ENCODE measurements at regions of chr9 and their contacts with region 1.

Region 1: DNA sequence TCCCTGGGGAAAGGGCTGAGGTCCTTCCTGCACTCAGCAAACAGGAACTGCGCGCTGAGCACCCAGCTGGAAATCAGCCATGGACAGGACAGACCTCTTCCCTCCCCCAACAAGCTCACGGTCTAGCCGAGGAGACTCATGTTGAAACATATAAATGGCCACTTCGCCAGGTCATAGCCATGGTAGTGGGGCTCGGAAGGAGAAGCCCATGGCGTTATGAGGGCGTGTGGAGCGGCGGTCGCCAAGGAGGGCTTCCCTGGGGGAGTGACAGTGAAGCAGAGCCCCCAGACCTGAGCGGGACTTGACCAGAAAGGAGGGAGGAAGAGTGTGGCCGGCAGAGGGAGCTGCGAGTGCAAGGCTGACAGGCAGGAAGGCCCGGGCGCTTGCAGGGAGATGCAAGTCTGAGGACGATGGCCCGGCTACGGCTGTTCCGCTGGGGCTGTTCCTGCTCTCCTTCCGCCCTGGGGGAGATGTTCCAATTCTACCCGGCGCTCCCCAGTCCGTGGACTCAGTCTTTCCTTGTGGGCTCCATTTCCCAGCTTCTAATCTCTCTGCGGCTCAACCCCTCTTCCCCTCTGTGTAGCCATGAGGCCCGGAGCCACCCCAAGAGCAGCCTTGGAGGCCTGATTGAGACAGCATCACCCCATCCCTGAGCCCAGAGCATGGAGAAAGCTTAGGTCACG is 43.9 kb upstream of the PRRC2B start:
- DNase-seq: peak; percentile 85 to 98
- H3K4me3 ChIP-seq: no peak overlapping the region
- CTCF ChIP-seq: peak in 1 of 3 donors; percentile 82
- POLR2A ChIP-seq: no peak

Region 2: DNA sequence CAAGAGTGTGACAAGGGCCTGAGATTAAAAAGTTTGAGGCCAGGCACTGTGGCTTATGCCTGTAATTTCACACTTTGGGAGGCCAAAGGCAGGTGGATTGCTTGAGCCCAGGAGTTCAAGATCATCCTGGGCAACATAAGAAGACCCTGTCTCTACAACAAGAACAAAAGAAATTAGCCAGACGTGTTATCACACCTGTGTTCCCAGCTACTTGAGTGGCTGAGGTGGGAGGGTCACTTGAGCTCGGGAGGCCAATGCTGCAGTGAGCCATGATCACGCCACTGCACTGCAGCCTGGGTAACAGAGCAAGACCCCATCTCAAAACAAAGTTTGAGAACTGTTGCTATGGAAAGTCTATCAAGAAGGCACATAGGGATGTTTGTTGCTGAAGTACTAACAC is 631.5 kb before region 1 on chr9:
- intact Hi-C with region 1: no loop called
- DNase-seq: no peak
- H3K4me3 ChIP-seq: no peak overlapping the region
- CTCF ChIP-seq: no peak
- POLR2A ChIP-seq: no peak

Region 3: DNA sequence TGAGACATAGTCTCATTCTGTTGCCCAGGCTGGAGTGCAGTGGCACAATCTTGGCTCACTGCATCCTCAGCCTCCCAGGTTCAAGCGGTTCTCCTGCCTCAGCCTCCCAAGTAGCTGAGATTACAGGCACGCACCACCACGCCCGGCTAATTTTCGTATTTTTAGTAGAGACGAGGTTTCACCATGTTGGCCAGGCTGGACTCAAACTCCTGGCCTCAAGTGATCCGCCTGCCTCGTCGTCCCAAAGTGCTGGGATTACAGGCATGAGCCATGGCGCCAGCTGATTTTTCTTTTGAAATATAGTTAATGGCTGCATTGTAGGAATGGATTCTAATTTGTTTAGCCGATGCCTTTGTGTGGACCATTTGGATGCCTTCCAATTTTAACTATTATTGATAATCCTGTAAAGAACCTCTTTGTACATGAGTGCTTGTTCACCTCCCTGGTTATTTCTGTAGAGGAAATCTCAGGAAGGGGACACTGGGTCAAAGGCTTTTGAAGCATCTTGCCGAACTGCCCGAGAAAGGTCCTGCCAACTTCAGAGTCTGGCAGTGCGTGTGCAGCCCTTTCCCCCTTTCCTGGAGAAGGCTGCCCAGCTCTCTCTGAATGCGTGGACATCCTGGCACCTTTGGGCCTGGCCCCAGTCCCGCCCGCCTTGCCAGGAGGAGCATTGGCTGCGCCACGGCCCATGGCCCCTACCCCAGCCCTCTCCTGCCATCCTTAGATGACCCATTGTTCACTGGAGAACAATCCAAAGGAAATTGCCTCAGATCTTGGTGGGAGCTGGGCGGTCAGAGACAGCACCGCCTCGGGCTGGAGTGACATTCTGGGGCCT is 233.5 kb before region 1 on chr9:
- intact Hi-C with region 1: no loop called
- DNase-seq: no peak
- H3K4me3 ChIP-seq: no peak overlapping the region
- CTCF ChIP-seq: no peak
- POLR2A ChIP-seq: no peak

Region 4: GRCh38 chr9:131407717-131408195 is 57.7 kb after region 1 on chr9:
- intact Hi-C with region 1: loop called (anchors 10 kb)
- DNase-seq: no peak
- H3K4me3 ChIP-seq: no peak overlapping the region
- CTCF ChIP-seq: no peak
- POLR2A ChIP-seq: no peak

Region 5: DNA sequence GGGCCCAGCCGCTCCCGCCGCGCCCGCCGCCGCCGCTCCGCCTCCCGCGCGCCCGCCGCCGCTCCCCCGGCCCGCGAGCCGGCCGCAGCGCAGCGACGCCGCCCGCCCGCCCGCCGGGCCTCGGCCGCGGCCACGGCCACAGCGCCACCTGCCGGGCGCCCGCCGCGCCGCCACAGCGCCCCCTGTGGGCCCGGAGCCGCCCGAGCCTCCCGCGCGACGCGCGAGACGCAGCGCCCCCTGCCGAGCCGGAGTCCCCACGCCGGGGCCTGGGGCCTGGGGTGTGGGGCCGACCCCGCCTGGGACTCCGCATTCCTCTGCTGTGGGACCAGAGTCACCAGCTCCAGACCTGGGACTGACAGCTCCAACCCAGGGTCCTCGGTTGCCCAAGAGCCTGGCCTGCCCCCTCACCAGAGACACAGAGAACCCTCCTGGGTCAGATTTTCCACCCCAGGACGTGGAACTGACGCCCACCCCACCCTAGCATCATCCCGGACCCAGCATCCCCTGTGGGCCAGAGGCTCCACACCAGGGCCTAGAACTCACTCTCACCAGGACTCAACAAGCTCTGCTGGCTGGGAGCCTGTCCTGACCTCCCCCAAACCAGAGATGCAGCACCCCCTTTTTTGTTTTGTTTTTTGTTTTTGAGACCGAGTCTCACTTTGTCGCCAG is 390.1 kb after region 1 on chr9 and contains the start of gene RAPGEF1:
- intact Hi-C with region 1: loop called (anchors 5 kb)
- DNase-seq: peak in 1 of 2 donors; percentile 93
- H3K4me3 ChIP-seq: peak within 1 kb of the TSS; percentile 28
- CTCF ChIP-seq: peak in 1 of 3 donors; percentile 29
- POLR2A ChIP-seq: no peak
- total RNA-seq, gene RAPGEF1: 18.0 to 70.8 (median 43.5) TPM